Posterior vena cava (tissue), 2 donors: ENCODE measurements at regions of chr11 and their contacts with region 1.

Region 1: DNA sequence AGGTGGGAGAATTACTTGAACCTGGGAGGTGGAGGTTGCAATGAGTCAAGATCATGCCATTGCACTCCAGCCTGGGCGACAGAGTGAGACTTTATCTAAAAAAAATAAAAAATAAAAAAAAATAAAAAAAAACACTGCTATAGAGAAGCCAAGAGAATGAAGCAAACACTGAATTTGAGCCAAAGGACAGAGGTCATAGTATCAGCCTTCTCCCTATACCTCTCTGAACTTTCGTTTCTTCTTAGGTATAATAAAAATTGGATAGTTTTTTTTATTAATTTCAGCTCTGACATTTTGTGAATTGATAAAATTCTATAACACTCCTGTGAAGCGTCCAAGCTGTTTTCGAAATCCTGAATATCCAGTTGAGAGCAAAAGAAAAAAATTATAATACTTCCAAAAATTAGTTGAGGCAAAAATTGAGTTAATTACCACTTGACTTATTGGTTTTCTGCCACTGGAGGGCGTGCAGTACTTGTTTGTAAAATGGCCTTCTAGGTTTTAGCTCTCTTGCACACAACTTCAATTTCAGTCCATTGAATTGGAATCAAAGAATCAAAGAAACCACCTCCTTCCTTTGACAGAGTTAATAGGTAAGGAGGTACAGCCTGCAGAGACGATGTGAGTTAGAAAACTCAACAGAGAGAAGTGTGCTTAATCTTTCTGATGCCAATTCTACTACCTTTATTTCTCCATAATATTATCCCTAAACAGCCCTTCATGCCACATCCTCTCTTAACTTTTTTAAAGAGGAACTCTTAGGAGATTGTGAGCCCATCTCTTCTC is 143.2 kb downstream of the BBOX1 start:
- DNase-seq: no peak

Region 2: DNA sequence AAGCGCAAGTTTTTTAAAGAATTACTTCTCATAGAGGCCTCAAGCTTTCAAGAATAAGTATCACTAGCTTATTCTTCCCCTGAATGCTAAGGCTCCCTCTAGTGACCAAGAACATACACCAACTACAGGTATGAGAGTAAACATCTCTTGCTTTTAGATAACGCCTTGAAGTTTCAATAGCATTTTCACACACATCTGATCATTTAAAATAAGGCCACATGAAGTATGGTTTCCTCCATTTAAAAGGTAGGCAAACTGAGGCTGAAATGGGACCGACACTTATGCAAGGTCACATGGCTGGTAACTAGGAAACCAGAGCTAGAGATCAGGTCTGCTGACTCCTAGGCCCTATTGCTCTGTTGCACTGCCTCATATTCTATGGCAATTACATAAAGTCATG is 112.6 kb after region 1 on chr11:
- intact Hi-C with region 1: loop called in 1 of 2 experiments (anchors 10 kb)
- DNase-seq: no peak

Region 3: GRCh38 chr11:27485930-27486773 is 302.3 kb after region 1 on chr11:
- intact Hi-C with region 1: loop called in 1 of 2 experiments (anchors 5 kb)
- DNase-seq: no peak

Region 4: GRCh38 chr11:27497284-27497866 is 313.5 kb after region 1 on chr11:
- intact Hi-C with region 1: loop called in 1 of 2 experiments (anchors 2 kb)
- DNase-seq: no peak